Naive thymus-derived CD4-positive, alpha-beta T cell (primary cell): ENCODE measurements at regions of chr4 and their contacts with region 1.

Region 1: DNA sequence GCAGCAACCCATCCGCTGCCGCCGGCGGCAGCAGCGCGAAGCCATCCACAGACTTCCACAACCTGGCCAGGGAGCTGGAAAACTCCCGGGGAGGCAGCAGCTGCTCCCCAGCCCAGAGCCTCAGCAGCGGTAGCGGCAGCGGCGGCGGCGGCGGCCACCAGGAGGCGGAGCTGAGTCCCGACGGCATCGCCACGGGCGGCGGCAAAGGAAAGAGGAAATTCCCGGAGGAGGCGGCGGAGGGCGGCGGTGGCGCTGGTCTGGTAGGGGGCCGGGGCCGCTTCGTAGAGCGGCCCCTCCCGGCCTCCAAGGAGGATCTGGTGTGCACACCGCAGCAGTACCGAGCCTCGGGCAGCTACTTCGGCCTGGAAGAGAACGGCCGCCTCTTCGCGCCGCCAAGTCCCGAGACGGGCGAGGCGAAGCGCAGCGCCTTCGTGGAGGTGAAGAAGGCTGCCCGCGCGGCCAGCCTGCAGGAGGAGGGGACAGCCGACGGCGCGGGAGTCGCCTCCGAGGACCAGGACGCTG is 4.9 kb downstream of the PRDM8 start:
- DNase-seq: peak; percentile 55 to 86 (median 70)
- ATAC-seq: peak; percentile 78
- H3K4me3 ChIP-seq: peak overlapping the region; percentile 63
- H3K4me3 Mint-ChIP-seq: peak overlapping the region; percentile 79 to 91 (median 84)
- H3K27ac ChIP-seq: peak overlapping the region; percentile 75
- H3K27ac Mint-ChIP-seq: peak overlapping the region in 8 of 9 donors; percentile 2 to 86 (median 76)
- H3K4me1 ChIP-seq: peaks cover 5 to 8% of the 10 kb centered on the region in 2 donors
- H3K4me1 Mint-ChIP-seq: peaks cover 18 to 30% (median 27%) of the 10 kb centered on the region in 7 donors
- H3K27me3 ChIP-seq: no peaks in the 10 kb centered on the region
- H3K27me3 Mint-ChIP-seq: peaks cover 12 to 53% (median 12%) of the 10 kb centered on the region in 5 donors

Region 2: GRCh38 chr4:80007745-80008149 is 194.5 kb before region 1 on chr4:
- CTCF ChIA-PET with region 1: no interaction called
- POLR2A ChIA-PET with region 1: no interaction called
- intact Hi-C with region 1: loop called in 1 of 2 experiments (anchors 5 kb)
- DNase-seq: no peak
- ATAC-seq: no peak
- H3K4me3 ChIP-seq: no peak overlapping the region
- H3K4me3 Mint-ChIP-seq: peak overlapping the region in 1 of 10 donors; percentile 43
- H3K27ac ChIP-seq: no peak overlapping the region
- H3K27ac Mint-ChIP-seq: peak overlapping the region in 3 of 9 donors; percentile 5 to 86 (median 56)
- H3K4me1 ChIP-seq: peaks cover 12 to 22% of the 10 kb centered on the region in 2 donors
- H3K4me1 Mint-ChIP-seq: peaks cover 19 to 59% (median 44%) of the 10 kb centered on the region in 7 donors
- H3K27me3 ChIP-seq: no peaks in the 10 kb centered on the region
- H3K27me3 Mint-ChIP-seq: no peaks in the 10 kb centered on the region

Region 3: GRCh38 chr4:80072744-80073472 is 129.3 kb before region 1 on chr4 and contains the start of gene ANTXR2:
- CTCF ChIA-PET with region 1: interaction called, 5 read pairs
- POLR2A ChIA-PET with region 1: interaction called, 11 read pairs
- intact Hi-C with region 1: loop called (anchors 1 to 5 kb)
- DNase-seq: peak; percentile 49 to 75 (median 56)
- ATAC-seq: peak; percentile 85
- H3K4me3 ChIP-seq: peak within 1 kb of the TSS; percentile 76
- H3K4me3 Mint-ChIP-seq: peak within 1 kb of the TSS; percentile 82 to 99 (median 96)
- H3K27ac ChIP-seq: peak within 1 kb of the TSS; percentile 86
- H3K27ac Mint-ChIP-seq: peak within 1 kb of the TSS; percentile 88 to 98 (median 96)
- H3K4me1 ChIP-seq: peaks cover 23 to 29% of the 10 kb centered on the region in 2 donors
- H3K4me1 Mint-ChIP-seq: peaks cover 25 to 76% (median 62%) of the 10 kb centered on the region in 7 donors
- H3K27me3 ChIP-seq: no peaks in the 10 kb centered on the region
- H3K27me3 Mint-ChIP-seq: peaks cover 0 to 3% (median 0%) of the 10 kb centered on the region in 5 donors
- total RNA-seq, gene ANTXR2: 20.3 to 69.8 (median 50.0) TPM

Region 4: DNA sequence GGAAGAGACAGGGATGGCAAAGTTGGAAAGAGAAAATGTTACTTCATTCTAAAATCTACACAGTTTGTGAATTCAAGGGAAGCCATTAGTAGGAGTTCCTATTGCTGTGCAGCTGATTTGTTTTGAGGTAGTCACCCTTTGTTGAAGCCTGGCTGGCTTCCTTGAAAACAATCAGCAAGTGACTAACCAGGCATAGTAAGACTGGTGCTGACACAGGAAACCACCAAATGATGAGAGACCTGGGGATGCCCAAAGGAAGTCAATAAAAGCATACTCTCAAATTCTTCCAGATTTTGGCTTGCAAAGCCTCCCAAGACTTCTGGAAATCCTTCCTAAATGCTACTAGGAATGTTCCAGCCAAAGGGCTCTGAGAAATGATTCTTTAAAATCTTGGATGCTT is 28.9 kb before region 1 on chr4:
- CTCF ChIA-PET with region 1: interaction called, 6 read pairs
- POLR2A ChIA-PET with region 1: interaction called, 11 read pairs
- intact Hi-C with region 1: loop called in 1 of 2 experiments (anchors 1 kb)
- DNase-seq: peak in 8 of 9 donors; percentile 42 to 78 (median 72)
- ATAC-seq: peak; percentile 98
- H3K4me3 ChIP-seq: peak overlapping the region; percentile 26
- H3K4me3 Mint-ChIP-seq: peak overlapping the region; percentile 66 to 84 (median 76)
- H3K27ac ChIP-seq: peak overlapping the region; percentile 75
- H3K27ac Mint-ChIP-seq: peak overlapping the region; percentile 92 to 99 (median 96)
- H3K4me1 ChIP-seq: peaks cover 33 to 40% of the 10 kb centered on the region in 2 donors
- H3K4me1 Mint-ChIP-seq: peaks cover 33 to 72% (median 60%) of the 10 kb centered on the region in 7 donors
- H3K27me3 ChIP-seq: no peaks in the 10 kb centered on the region
- H3K27me3 Mint-ChIP-seq: peaks cover 0 to 2% (median 0%) of the 10 kb centered on the region in 5 donors

Region 5: GRCh38 chr4:80279751-80280150 is 77.5 kb after region 1 on chr4:
- CTCF ChIA-PET with region 1: no interaction called
- POLR2A ChIA-PET with region 1: no interaction called
- intact Hi-C with region 1: no loop called
- DNase-seq: no peak
- ATAC-seq: no peak
- H3K4me3 ChIP-seq: no peak overlapping the region
- H3K4me3 Mint-ChIP-seq: no peak overlapping the region
- H3K27ac ChIP-seq: no peak overlapping the region
- H3K27ac Mint-ChIP-seq: no peak overlapping the region
- H3K4me1 ChIP-seq: no peaks in the 10 kb centered on the region
- H3K4me1 Mint-ChIP-seq: no peaks in the 10 kb centered on the region
- H3K27me3 ChIP-seq: no peaks in the 10 kb centered on the region
- H3K27me3 Mint-ChIP-seq: peaks cover 0 to 21% (median 10%) of the 10 kb centered on the region in 5 donors

Region 6: DNA sequence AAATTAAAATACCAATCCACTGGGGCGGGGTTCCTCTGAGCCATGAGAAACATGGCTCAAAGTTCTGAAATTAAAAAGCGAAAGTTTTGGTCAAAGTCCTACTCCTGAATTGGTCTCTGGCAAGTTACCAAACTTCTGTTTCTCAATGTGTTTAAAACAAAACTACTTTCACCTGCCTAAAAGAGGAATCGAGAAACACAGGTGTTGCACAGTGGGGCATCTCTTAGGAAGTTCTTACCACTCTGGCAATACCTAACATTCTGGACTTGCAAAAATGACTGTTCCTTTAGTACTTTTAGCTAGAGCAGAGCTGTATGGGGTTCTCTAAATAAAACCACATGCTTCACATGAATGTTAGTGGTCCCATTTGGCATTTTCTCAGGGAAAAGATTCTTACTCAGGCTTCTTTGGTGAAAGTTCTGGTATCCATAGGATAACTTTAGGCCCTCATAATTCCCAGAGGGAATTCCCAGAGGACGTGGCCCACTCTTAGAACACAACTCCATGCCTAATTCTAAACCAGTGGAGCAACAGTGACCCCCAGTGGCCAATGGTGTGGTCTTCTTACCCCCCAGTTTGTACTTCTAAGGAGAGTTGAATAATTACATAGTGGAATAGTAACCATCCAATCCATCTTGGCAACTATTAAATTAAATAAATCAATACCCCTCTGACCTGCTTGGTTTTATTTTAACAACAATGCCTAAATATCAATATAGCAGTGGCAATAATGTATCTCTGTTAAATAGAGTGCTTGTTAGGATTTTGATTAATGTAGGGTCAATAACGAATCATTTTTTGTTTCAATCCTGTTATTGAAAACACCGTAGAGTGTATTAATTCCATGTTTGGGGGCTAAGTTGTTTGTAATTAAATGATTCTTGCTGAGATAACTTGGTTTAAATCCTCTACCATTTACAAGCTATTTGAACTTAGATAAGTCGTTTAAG is 850.1 kb after region 1 on chr4:
- CTCF ChIA-PET with region 1: no interaction called
- POLR2A ChIA-PET with region 1: no interaction called
- intact Hi-C with region 1: loop called in 1 of 2 experiments (anchors 5 kb)
- DNase-seq: peak in 7 of 9 donors; percentile 11 to 52 (median 26)
- ATAC-seq: peak; percentile 54
- H3K4me3 ChIP-seq: no peak overlapping the region
- H3K4me3 Mint-ChIP-seq: no peak overlapping the region
- H3K27ac ChIP-seq: no peak overlapping the region
- H3K27ac Mint-ChIP-seq: no peak overlapping the region
- H3K4me1 ChIP-seq: no peaks in the 10 kb centered on the region
- H3K4me1 Mint-ChIP-seq: no peaks in the 10 kb centered on the region
- H3K27me3 ChIP-seq: peaks cover 0 to 1% of the 10 kb centered on the region in 2 donors
- H3K27me3 Mint-ChIP-seq: peaks cover 0 to 16% (median 11%) of the 10 kb centered on the region in 5 donors

Region 7: GRCh38 chr4:82044142-82044993 is 1842.1 kb after region 1 on chr4:
- CTCF ChIA-PET with region 1: no interaction called
- POLR2A ChIA-PET with region 1: no interaction called
- intact Hi-C with region 1: no loop called
- DNase-seq: peak in 3 of 9 donors; percentile 2 to 5 (median 3)
- ATAC-seq: peak; percentile 67
- H3K4me3 ChIP-seq: no peak overlapping the region
- H3K4me3 Mint-ChIP-seq: peak overlapping the region in 5 of 10 donors; percentile 21 to 82 (median 58)
- H3K27ac ChIP-seq: no peak overlapping the region
- H3K27ac Mint-ChIP-seq: no peak overlapping the region
- H3K4me1 ChIP-seq: no peaks in the 10 kb centered on the region
- H3K4me1 Mint-ChIP-seq: peaks cover 0 to 11% (median 7%) of the 10 kb centered on the region in 7 donors
- H3K27me3 ChIP-seq: no peaks in the 10 kb centered on the region
- H3K27me3 Mint-ChIP-seq: peaks cover 41 to 76% (median 58%) of the 10 kb centered on the region in 5 donors